ENCODE measurements at regions of chr22 and their contacts with region 1.

Region 1: DNA sequence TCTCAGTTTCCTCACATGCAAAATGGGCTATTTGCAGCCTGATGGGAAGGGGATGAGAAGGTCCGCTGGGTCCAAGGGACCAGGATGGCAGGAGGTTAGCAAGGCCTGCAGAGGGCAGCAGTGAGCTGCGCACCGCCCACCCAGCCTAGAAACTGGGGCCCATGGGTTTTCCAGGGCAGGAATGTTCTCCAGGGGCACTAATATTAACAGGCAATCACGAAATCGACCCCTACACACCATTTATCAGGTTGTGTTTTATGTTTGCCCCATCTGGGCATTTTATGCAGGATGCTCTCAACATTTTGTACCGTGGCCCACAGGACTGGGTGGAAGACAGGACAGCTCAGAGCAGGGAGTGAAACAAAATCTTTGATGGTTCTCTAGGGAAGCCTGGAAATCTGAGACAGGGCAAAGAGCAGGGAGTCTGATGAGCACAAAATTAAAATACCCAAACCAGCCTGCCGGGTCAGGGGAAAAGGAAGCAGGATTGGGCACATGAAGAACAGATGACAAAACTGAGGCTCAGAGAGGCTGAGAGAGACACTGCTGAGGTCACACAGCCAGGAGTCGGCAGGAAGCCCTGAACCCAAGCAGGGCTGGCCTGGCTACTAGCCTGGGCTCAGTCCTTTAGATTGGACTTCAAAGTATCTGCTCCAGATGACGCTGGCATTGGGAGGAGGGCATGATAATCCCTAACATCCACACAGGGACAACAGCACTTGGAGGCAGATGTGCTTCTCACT is 1.6 kb upstream of the BCR start:
- DNase-seq: no peak
- H3K4me3 ChIP-seq: no peak overlapping the region
- H3K27ac ChIP-seq: peak overlapping the region; percentile 83
- H3K4me1 ChIP-seq: peaks cover 47% of the 10 kb centered on the region
- H3K27me3 ChIP-seq: no peaks in the 10 kb centered on the region
- CTCF ChIP-seq: peak; percentile 86 to 94 (median 89)
- POLR2A ChIP-seq: no peak

Region 2: GRCh38 chr22:23119494-23120414 is 58.9 kb before region 1 on chr22:
- intact Hi-C with region 1: no loop called
- DNase-seq: no peak
- H3K4me3 ChIP-seq: no peak overlapping the region
- H3K27ac ChIP-seq: no peak overlapping the region
- H3K4me1 ChIP-seq: no peaks in the 10 kb centered on the region
- H3K27me3 ChIP-seq: no peaks in the 10 kb centered on the region
- CTCF ChIP-seq: no peak
- POLR2A ChIP-seq: no peak

Region 3: DNA sequence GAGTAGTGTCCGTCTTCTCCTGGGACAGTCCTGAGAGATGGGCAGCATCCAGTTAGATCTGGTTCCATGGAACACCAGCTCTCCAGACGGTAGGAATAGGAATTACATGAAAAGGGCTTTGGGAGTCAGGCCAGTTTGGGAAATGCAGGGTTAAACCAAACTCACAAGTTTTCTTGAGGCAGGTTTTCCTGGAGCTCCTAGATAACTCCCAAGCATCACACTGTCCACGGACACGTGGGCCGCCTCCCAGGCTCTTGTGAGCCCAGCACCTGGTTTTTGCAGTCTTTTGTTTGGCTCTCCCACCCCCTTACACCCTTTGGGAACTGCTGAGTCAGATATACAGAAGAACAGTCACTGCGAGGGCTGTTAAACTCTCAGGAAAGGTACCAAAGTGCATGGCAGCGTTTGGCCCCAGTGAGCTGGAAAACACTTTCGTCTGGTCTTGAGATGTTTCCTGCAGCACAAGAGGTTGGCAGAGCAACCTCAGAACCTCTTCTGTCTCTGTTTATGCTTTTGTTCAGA is 91.6 kb after region 1 on chr22:
- intact Hi-C with region 1: no loop called
- DNase-seq: no peak
- H3K4me3 ChIP-seq: no peak overlapping the region
- H3K27ac ChIP-seq: no peak overlapping the region
- H3K4me1 ChIP-seq: no peaks in the 10 kb centered on the region
- H3K27me3 ChIP-seq: no peaks in the 10 kb centered on the region
- CTCF ChIP-seq: no peak
- POLR2A ChIP-seq: no peak

Region 4: DNA sequence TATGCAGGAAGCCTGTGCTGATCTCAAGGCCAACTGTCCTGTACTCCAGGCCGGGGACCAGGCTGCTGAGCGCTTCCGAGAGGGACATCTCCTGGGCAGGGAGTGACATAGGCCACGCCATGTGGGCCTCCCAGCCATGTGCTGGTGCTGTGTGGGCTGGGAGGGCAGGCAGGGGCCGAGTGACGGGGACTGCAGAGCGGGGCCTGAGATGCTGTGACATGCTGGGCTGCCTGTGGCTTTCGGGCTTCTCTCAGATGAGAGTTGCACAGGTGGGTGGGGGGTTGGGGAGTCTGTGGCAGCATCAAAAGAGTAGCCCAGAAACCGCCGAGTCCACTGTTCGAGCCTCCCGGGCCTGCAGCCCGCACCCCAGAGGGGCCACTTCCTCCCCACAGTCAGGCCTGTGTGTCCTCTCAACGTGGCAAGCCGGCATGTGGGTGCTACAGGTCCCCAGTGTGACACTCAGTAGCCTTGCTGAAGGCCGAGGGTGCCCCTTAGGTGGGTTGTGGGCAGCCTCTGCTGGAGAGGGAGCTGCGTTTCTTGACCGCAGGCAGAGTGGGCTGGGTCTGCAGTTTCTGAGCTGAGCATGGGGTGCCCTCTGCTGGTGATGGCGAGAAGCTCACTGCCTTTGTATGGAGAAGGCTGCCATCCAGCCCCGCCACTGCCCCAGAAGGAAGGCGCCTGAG is 102.9 kb after region 1 on chr22:
- intact Hi-C with region 1: loop called (anchors 1 kb)
- DNase-seq: no peak
- H3K4me3 ChIP-seq: peak overlapping the region in 1 of 2 donors; percentile 9
- H3K27ac ChIP-seq: peak overlapping the region; percentile 81
- H3K4me1 ChIP-seq: peaks cover 48% of the 10 kb centered on the region
- H3K27me3 ChIP-seq: no peaks in the 10 kb centered on the region
- CTCF ChIP-seq: peak; percentile 93 to 96 (median 95)
- POLR2A ChIP-seq: no peak

Region 5: DNA sequence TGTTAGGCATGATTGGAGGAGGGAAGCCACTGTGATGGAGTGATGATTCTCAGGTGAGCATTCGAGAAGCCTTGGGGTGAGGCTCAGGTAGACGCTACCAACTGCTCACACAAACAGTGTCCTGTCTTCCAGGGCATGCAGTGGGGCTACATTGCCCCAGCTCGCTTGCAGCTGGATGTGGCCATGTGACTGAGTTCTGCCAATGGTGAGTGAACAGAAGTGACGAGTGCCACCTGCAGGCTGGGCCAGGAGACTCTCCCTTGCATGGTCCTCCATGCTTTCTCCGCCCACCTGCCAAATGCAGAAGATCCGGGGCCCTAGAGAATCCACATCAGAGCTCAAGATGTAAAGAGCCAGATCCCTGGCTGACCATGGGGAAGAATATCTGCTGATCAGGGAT is 197.6 kb after region 1 on chr22:
- intact Hi-C with region 1: loop called (anchors 5 kb)
- DNase-seq: no peak
- H3K4me3 ChIP-seq: no peak overlapping the region
- H3K27ac ChIP-seq: no peak overlapping the region
- H3K4me1 ChIP-seq: no peaks in the 10 kb centered on the region
- H3K27me3 ChIP-seq: no peaks in the 10 kb centered on the region
- CTCF ChIP-seq: no peak
- POLR2A ChIP-seq: no peak